AG04449 (cell line): ENCODE measurements at regions of chr11 and their contacts with region 1.

Region 1: DNA sequence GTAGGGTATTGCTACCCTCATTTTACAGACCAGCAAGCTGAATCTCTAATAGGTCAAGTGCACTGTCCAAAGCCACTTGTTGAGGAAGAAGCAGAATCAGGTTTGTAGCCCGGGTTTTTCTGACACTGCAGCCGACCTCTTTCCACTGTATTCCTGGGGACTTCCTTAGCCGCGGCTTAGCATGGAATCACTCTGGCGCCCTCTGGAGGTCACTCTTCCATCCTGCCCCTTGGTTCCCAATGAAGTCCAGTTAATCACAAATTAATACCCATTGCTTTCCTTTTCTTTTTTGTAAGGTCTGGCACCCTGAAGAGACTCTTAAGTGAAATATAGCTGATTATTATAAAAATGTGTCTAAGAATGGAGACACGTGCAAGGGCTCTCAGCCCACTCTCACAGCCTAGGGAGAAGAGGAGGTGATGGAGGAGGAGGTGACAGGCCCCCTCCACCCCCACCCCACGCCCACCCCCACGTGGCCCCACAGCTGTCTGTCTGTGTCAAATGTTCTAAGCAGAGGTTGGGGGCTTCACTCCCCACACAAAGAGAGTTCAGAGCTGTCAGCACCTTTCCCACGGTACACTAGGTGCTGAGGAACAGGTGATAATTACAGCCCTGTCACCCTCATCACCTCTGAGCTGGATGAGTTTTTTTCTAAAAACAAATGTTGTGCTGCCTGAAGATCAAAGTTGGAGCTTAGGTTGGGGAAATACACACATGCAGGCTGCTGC is 57.7 kb upstream of the DRD2 start:
- DNase-seq: peak; percentile 29
- H3K4me3 ChIP-seq: no peak overlapping the region
- CTCF ChIP-seq: peak; percentile 82

Region 2: DNA sequence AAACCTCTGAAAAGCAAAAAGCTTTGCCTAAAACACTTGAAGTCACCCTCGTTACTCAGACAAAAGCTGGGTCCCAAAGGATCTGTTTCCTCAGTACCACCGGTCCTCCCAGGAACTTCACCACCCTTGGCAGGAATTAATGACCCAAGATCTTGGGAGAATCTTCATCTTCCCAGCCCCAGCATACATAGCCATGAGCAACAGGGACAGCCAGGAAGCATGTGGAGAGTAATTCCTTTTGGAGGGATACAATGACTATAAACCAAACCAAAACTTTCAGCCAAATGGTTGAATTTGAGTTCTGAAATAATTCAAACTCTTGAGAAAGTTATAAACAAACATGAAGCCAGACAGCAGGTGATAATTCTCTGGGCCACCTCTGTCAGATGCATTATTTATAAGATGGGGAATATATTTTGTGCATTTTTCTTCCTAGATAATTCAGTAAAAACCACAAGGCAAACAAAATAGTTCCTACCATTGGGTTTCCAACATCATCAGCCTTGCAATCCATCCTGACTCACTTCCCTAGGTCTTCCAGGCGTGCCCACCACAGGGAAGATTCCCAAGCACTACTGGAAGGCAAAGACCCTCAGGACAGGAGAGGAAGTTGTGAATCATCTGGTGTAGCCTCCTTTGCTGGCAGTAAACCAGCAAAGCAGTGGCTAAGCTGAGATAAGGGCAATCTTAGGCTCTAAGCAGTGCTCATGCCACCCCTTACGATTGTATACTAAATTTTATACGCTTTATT is 14.1 kb after region 1 on chr11:
- CTCF ChIA-PET with region 1: interaction called, 22 read pairs
- POLR2A ChIA-PET with region 1: no interaction called
- DNase-seq: no peak
- H3K4me3 ChIP-seq: no peak overlapping the region
- CTCF ChIP-seq: no peak

Region 3: DNA sequence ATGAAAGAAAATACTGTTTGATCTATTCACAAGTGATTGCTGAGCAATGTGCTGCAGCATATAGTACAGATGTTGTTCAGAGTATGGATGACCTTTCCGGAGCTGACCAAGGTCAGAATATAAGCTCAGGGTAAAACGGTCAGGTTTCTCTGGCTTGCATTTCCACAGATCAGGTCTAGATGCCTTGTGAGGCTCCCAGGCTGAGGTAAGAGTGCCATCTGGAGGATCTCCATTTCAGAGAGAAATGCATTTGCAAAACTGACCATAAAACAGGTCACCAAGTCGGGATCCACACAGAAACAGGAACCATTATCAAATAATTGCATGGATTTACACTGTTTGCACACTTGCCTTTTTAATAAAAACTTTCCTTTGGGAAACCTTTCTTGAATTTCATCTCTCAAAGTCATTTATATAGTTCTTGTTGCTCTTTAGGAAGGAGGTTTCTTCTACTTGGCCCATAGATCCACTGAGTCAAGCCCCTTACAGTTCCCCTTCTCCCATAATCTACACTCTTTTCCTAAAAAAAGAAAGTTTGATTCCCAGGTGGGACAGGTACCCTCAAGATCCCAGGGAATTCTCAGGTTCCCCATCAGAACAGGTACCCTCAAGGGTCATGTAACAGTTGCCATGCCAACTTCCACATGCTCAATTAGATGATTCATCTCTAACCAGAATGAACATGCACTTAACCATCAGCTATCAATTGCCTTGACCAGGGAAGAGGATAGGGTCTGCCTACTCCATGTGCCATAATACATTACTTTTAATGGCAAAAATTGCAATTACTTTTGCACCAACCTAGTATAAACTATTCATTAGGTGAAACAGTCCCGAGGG is 198.2 kb after region 1 on chr11:
- CTCF ChIA-PET with region 1: interaction called, 29 read pairs
- POLR2A ChIA-PET with region 1: no interaction called
- DNase-seq: peak; percentile 24
- H3K4me3 ChIP-seq: no peak overlapping the region
- CTCF ChIP-seq: peak; percentile 76